HEK293T (cell line): ENCODE measurements at regions of chr6 and their contacts with region 1.

Region 1: GRCh38 chr6:158605266-158605878 is 39.2 kb downstream of the DYNLT1 start:
- DNase-seq: peak; percentile 84

Region 2: GRCh38 chr6:158213925-158214674 is 391.3 kb before region 1 on chr6:
- CTCF ChIA-PET with region 1: interaction called, 10 read pairs
- POLR2A ChIA-PET with region 1: interaction called, 3 read pairs
- DNase-seq: peak; percentile 74